ENCODE measurements at regions of chr5 and their contacts with region 1.

Region 1: DNA sequence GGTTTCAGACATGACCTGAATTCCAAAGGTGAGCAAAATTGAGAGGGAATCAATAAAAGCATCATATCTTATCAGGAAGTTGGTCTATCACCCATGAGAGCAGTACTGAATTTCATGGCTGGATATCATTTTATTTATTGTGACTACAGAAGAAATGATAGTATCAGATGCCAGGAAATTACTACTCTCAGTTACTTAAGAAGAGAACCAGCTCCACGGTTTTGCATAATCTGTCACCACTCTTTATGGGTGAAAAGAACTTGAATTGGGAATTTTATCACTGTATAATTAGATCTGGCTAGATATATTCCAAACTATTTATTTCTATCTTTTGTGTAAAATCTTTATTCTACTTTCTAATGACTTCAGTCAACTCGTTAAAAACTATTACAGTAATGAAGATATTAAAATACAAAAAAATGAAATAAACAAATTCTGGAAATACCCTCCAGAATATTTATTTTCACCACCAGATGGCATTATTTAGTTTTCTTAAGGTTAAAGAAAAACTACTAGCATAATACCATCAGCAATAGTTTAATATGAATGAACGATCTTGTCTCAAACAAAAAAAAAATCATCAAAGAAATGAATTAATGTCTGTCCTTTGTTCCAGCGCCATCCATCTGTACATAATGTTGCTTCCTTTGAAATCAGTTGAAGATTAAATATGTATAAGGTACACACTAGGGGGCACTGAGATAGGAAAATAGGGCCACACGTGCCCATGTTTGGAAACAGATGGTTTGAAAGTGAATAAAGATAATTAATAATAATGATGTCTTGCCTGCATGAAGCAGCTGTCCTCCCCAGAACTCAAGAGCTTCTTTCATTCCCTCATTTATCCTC is 84.7 kb upstream of the SLCO6A1 start:
- DNase-seq: no peak
- H3K4me3 ChIP-seq: no peak overlapping the region
- H3K27ac ChIP-seq: no peak overlapping the region
- H3K4me1 ChIP-seq: peaks cover 0 to 6% (median 0%) of the 10 kb centered on the region in 4 donors
- H3K27me3 ChIP-seq: no peaks in the 10 kb centered on the region
- CTCF ChIP-seq: peak; percentile 23 to 51 (median 32)
- EP300 ChIP-seq: no peak
- POLR2A ChIP-seq: no peak

Region 2: DNA sequence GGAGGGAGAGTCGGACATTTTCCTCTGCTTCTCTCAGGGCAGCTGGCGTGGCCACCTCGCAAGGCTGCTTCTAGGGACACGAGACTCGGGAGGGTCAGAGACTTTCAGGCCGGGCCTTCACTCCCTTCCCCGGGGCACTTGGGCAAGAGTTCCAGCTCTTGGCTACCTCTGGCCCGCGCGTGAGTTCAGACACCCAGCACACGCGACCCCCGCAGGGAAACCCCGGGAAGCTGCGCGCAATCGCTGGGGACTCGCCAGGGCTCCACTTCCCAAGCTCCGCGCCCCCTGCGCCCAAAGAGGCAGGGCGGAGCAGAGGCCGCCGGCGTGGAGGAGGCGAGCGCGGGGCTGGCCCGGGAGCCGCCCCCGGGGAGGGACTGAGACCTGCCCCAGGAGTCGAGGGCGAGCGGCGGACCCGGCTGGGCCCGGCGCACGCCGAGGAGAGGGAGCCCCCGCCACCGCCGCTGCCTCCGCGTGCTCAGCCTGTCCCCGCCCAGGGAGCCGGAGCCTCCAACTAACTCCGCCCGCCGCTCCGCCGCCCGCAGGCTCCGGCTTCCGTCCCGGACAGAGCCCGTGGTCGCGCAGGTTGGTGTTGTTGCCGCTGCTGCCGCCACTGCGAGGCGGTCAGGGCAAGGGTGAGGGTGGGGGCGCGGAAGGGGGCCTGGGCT is 171.4 kb after region 1 on chr5 and contains the start of gene PAM:
- intact Hi-C with region 1: loop called (anchors 10 kb)
- DNase-seq: peak; percentile 88
- H3K4me3 ChIP-seq: peak within 1 kb of the TSS; percentile 64 to 89 (median 79)
- H3K27ac ChIP-seq: peak within 1 kb of the TSS; percentile 66 to 85 (median 78)
- H3K4me1 ChIP-seq: peaks cover 0 to 40% (median 38%) of the 10 kb centered on the region in 4 donors
- H3K27me3 ChIP-seq: no peaks in the 10 kb centered on the region
- CTCF ChIP-seq: no peak
- EP300 ChIP-seq: no peak
- POLR2A ChIP-seq: peak in 1 of 2 donors; percentile 34
- total RNA-seq, gene PAM: 198 to 261 (median 240) TPM

Region 3: GRCh38 chr5:102971697-102972293 is 388.3 kb after region 1 on chr5:
- intact Hi-C with region 1: loop called (anchors 5 kb)
- DNase-seq: no peak
- H3K4me3 ChIP-seq: no peak overlapping the region
- H3K27ac ChIP-seq: no peak overlapping the region
- H3K4me1 ChIP-seq: no peaks in the 10 kb centered on the region
- H3K27me3 ChIP-seq: no peaks in the 10 kb centered on the region
- CTCF ChIP-seq: peak in 3 of 4 experiments; percentile 37 to 48 (median 43)
- EP300 ChIP-seq: no peak
- POLR2A ChIP-seq: no peak

Region 4: DNA sequence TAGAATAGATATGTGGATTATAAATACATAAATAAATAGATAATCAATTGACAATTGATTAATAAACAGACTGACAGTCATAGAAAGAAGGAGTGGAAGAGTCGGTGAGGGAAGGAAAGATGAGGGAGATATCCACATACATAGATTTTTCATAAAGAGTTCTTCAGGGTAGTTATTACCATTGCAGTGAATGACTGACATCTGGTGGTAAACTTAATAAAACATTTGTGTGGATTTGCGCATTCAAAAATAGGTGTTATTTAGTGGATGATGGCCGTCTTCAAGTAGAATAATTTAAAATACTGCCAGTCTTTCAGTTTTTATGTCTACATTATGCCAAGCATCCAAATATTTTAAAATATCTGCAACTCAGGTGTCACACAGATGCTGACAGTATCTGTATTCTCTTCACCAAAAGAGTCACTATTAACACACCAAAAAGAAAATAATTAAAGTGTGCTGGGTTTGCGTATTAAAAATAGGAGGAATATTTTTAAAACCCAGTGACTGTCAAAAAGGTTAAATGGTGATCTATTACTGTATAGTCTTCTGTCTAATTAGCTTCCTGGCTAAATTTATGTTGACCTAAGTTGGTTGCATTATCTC is 457.7 kb after region 1 on chr5:
- intact Hi-C with region 1: loop called (anchors 2 kb)
- DNase-seq: no peak
- H3K4me3 ChIP-seq: no peak overlapping the region
- H3K27ac ChIP-seq: no peak overlapping the region
- H3K4me1 ChIP-seq: no peaks in the 10 kb centered on the region
- H3K27me3 ChIP-seq: no peaks in the 10 kb centered on the region
- CTCF ChIP-seq: peak in 2 of 4 experiments; percentile 22 to 50
- EP300 ChIP-seq: no peak
- POLR2A ChIP-seq: no peak

Region 5: GRCh38 chr5:103139264-103139865 is 555.9 kb after region 1 on chr5:
- intact Hi-C with region 1: loop called (anchors 5 kb)
- DNase-seq: peak; percentile 79
- H3K4me3 ChIP-seq: no peak overlapping the region
- H3K27ac ChIP-seq: no peak overlapping the region
- H3K4me1 ChIP-seq: no peaks in the 10 kb centered on the region
- H3K27me3 ChIP-seq: no peaks in the 10 kb centered on the region
- CTCF ChIP-seq: peak; percentile 59 to 84 (median 72)
- EP300 ChIP-seq: no peak
- POLR2A ChIP-seq: no peak